Ovary (tissue), 10 donors: ENCODE measurements at regions of chr9 and their contacts with region 1.

Region 1: DNA sequence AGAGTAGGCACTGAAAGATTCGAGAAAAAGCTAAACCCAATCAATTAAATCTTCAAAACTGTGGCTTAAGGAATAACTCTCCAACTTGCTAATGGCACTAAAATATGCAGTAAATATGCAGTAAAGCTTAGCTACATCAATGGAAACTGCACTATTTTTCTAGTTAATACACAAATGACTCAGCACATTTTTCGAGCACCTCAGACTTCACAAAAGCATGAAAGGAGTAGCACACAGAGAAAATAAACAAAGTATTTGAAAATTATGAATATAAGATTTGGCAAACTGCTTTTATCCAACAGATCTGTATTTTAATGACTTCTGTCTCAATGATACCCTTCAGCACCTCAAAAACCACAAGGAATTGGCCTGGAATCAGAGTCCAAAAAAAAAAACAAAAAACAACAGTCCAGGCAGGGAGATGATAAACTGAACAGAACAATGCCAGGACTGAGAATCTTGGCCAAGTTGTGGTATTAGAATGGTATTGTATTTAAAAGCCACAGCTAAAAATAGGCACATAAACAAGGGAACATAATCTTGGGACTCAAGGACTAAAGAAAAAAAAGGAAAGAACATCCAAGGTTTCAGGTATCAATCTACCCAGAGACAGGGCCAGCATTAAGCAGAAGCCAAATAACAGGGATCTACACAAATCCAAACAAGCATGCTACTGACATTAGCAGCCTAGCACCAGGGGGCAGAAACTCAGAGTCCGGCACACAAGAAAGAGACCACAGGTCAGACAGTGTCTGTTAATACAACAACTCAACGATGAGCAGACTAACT is 21.4 kb downstream of the TMEM245 start:
- DNase-seq: peak in 3 of 5 donors; percentile 40 to 56 (median 45)
- H3K4me3 ChIP-seq: no peak overlapping the region
- H3K27ac ChIP-seq: peak overlapping the region; percentile 14 to 76
- H3K4me1 ChIP-seq: peaks cover 31% of the 10 kb centered on the region
- H3K27me3 ChIP-seq: no peaks in the 10 kb centered on the region
- CTCF ChIP-seq: peak in 1 of 3 donors; percentile 41
- EP300 ChIP-seq: no peak
- POLR2A ChIP-seq: no peak

Region 2: DNA sequence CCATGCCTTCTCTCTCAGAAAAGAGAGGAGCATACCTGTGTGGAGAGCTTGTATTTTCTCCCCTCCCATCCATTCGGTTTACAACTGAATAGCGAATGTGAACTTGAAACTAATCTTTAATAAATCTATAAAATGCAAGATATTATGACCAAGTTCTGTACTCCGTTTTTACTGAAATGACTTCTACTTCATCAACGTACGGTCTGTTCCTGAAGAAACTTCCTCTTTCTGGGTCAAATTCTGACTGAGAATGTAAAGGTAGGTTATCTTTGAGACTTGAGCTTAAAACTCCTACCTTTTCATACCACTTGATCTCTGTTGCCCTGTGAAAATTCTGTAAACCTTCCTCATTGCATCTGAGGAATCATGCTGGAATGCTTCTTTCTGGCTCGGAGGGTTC is 80.9 kb before region 1 on chr9:
- intact Hi-C with region 1: no loop called
- DNase-seq: no peak
- H3K4me3 ChIP-seq: no peak overlapping the region
- H3K27ac ChIP-seq: no peak overlapping the region
- H3K4me1 ChIP-seq: peaks cover 21% of the 10 kb centered on the region
- H3K27me3 ChIP-seq: no peaks in the 10 kb centered on the region
- CTCF ChIP-seq: no peak
- EP300 ChIP-seq: no peak
- POLR2A ChIP-seq: no peak

Region 3: DNA sequence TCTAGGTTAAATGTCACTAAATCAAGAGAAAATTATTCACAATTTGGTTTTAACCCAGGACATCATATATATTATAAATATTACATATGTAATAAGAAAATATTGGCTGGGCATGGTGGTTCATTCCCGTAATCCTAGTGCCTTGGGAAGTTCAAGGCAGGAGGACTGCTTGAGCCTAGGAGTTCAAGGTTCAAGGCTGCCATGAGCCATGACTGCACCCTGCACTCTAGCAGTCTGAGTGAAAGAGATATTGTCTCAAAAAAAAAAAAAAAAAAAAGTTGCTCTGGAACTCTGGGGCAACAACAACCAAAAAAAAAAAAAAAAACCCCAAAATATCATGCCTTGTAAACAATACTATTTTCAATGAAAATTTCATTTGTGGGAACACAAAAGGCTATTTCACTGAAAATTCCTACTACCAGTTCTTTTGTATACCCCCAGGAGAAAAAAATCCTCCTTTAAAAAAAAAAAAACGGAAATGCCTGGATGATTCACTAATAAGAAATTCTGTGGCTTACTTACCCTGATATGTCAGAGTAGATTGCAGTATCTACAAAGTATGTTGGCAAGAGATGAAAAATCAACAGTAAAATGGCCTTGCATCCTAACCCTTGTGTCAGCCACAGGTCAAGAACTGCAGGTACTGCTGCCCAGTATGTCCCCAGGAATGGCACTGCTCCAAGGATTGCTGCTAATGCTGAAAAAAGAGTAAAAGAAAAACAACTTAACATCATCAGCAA is 62.5 kb before region 1 on chr9:
- intact Hi-C with region 1: loop called in 1 of 4 experiments (anchors 10 kb)
- DNase-seq: peak; percentile 55 to 85 (median 74)
- H3K4me3 ChIP-seq: no peak overlapping the region
- H3K27ac ChIP-seq: peak overlapping the region in 1 of 2 donors; percentile 65
- H3K4me1 ChIP-seq: peaks cover 12% of the 10 kb centered on the region
- H3K27me3 ChIP-seq: no peaks in the 10 kb centered on the region
- CTCF ChIP-seq: no peak
- EP300 ChIP-seq: no peak
- POLR2A ChIP-seq: no peak